ENCODE measurements at regions of chr1 and their contacts with region 1.

Region 1: DNA sequence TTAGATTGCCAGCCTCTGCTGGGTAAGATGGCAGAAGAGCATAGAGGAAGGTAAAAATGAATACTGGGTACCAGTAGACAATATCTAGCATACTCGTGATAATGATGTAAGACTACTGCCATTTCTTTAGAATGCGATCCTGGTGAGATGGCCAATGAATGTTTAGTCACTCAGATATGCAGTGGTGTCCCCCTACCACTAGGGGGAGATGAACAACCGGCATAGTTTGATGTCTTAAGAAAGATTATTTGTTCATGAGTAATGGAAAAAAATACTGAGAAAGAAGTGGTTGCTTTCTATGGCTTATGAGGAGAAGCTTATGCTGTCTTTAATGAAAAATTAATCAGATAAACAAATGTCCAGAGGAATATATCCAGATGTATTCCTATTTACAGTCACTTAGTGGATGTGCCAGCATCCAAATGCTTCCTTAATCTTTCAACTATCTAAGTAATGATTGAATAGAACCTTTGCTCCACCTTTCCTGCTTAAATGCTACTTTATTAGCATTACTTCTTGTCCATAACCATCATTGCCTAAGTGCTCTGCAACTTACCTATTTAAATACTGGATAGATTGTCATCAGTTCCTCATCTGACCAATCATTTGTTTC is 256.6 kb downstream of the ST6GALNAC3 start:
- DNase-seq: peak in 1 of 3 donors; percentile 14
- ATAC-seq: peak; percentile 29 to 69
- H3K4me3 ChIP-seq: no peak overlapping the region
- H3K27ac ChIP-seq: no peak overlapping the region
- H3K4me1 ChIP-seq: no peaks in the 10 kb centered on the region
- H3K27me3 ChIP-seq: no peaks in the 10 kb centered on the region

Region 2: GRCh38 chr1:77126307-77126706 is 795.2 kb after region 1 on chr1:
- intact Hi-C with region 1: loop called in 2 of 4 experiments (anchors 10 kb)
- DNase-seq: no peak
- ATAC-seq: peak; percentile 62 to 67
- H3K4me3 ChIP-seq: no peak overlapping the region
- H3K27ac ChIP-seq: no peak overlapping the region
- H3K4me1 ChIP-seq: no peaks in the 10 kb centered on the region
- H3K27me3 ChIP-seq: no peaks in the 10 kb centered on the region

Region 3: GRCh38 chr1:77143529-77144121 is 812.5 kb after region 1 on chr1:
- intact Hi-C with region 1: loop called in 1 of 4 experiments (anchors 10 kb)
- DNase-seq: no peak
- ATAC-seq: no peak
- H3K4me3 ChIP-seq: no peak overlapping the region
- H3K27ac ChIP-seq: no peak overlapping the region
- H3K4me1 ChIP-seq: no peaks in the 10 kb centered on the region
- H3K27me3 ChIP-seq: no peaks in the 10 kb centered on the region